B cell (primary cell): ENCODE measurements at regions of chr14 and their contacts with region 1.

Region 1: GRCh38 chr14:75654127-75654732 is 6.4 kb downstream of the ERG28 start:
- DNase-seq: peak; percentile 82
- ATAC-seq: peak; percentile 96
- H3K4me3 ChIP-seq: no peak overlapping the region
- H3K4me3 Mint-ChIP-seq: no peak overlapping the region
- H3K27ac ChIP-seq: no peak overlapping the region
- H3K27ac Mint-ChIP-seq: no peak overlapping the region
- H3K4me1 ChIP-seq: no peaks in the 10 kb centered on the region
- H3K4me1 Mint-ChIP-seq: peaks cover 4% of the 10 kb centered on the region
- H3K27me3 ChIP-seq: no peaks in the 10 kb centered on the region
- H3K27me3 Mint-ChIP-seq: no peaks in the 10 kb centered on the region
- CTCF ChIP-seq: peak; percentile 94

Region 2: DNA sequence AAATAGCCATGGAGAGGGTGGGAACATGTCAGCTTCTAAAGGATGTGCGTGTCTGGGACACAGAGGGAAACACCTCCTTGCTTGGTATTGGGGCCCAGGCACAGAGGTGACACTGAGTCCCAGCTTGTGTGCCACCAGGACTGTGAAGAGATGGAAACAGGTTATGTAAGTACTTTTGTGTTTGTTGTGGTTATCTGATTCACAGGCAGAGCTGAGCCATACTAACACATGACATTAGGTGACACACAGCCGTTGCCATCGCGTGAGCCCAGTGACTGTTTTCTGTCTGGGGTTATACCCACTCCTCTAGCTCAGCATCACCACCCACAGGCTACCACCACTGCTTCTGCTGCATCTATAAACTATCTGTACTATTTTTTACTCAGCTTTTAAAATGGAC is 87.9 kb before region 1 on chr14:
- CTCF ChIA-PET with region 1: interaction called, 447 read pairs
- POLR2A ChIA-PET with region 1: no interaction called
- intact Hi-C with region 1: no loop called
- DNase-seq: no peak
- ATAC-seq: no peak
- H3K4me3 ChIP-seq: no peak overlapping the region
- H3K4me3 Mint-ChIP-seq: no peak overlapping the region
- H3K27ac ChIP-seq: no peak overlapping the region
- H3K27ac Mint-ChIP-seq: no peak overlapping the region
- H3K4me1 ChIP-seq: peaks cover 0 to under 1% of the 10 kb centered on the region in 2 donors
- H3K4me1 Mint-ChIP-seq: peaks cover 4% of the 10 kb centered on the region
- H3K27me3 ChIP-seq: no peaks in the 10 kb centered on the region
- H3K27me3 Mint-ChIP-seq: no peaks in the 10 kb centered on the region
- CTCF ChIP-seq: no peak

Region 3: DNA sequence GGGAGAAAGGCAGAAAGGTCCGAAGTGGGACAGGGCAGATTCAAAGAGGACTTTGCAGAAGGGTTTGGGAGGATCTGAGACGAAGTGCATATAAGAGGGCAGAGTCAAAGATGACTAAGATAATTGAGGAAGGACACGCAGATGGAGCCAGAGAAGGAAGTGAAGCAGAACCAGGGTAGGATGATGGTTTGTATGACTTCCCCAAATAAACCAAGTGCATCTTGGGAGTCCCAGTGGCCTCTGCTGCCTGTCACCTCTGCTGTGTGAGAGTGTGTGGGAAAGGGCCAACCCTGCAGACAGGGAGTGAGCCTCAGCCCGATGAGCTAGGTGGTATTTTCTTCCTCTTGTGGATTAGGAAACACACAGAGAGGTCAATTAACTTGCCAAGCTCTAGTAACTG is 39.0 kb before region 1 on chr14:
- CTCF ChIA-PET with region 1: interaction called, 15 read pairs
- POLR2A ChIA-PET with region 1: no interaction called
- intact Hi-C with region 1: no loop called
- DNase-seq: peak; percentile 60
- ATAC-seq: peak; percentile 85
- H3K4me3 ChIP-seq: no peak overlapping the region
- H3K4me3 Mint-ChIP-seq: no peak overlapping the region
- H3K27ac ChIP-seq: no peak overlapping the region
- H3K27ac Mint-ChIP-seq: no peak overlapping the region
- H3K4me1 ChIP-seq: peaks cover 8 to 9% of the 10 kb centered on the region in 2 donors
- H3K4me1 Mint-ChIP-seq: peaks cover 14% of the 10 kb centered on the region
- H3K27me3 ChIP-seq: peaks cover 0 to 3% (median 1%) of the 10 kb centered on the region in 4 experiments
- H3K27me3 Mint-ChIP-seq: no peaks in the 10 kb centered on the region
- CTCF ChIP-seq: no peak

Region 4: DNA sequence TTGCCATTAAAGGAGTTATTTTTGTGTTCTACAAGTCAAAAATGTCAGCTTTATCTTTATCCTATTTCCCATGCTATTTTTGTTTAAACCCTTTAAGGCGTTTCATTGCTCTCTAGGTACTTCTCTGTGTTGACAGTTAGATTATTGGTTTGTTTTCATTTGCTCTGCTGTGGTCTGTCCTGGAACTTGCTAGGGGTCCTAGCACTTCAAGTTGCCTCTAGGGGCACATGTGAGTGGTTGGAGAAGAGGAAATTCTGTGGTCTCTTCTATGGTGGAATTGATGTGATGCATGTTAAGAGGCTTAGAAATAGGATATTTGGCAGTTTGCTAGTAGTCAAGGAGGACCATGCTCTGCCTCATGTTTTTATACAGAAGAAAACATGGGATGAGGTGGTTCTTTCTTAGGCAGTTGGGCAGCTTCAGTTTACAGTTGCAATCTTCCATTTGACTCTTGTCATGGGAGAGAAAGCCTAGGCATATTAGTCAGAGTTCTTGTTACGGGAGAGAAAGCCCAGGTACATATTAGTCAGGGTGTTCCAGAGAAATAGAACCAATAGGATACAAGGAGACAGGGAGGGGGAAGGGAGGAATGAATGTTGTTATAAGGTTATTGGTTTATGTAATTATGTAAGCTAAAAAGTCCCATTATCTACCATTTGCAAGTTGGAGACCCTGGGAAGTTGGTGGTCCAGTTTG is 21.2 kb after region 1 on chr14:
- CTCF ChIA-PET with region 1: interaction called, 10 read pairs
- POLR2A ChIA-PET with region 1: no interaction called
- intact Hi-C with region 1: no loop called
- DNase-seq: no peak
- ATAC-seq: no peak
- H3K4me3 ChIP-seq: no peak overlapping the region
- H3K4me3 Mint-ChIP-seq: no peak overlapping the region
- H3K27ac ChIP-seq: no peak overlapping the region
- H3K27ac Mint-ChIP-seq: no peak overlapping the region
- H3K4me1 ChIP-seq: no peaks in the 10 kb centered on the region
- H3K4me1 Mint-ChIP-seq: no peaks in the 10 kb centered on the region
- H3K27me3 ChIP-seq: no peaks in the 10 kb centered on the region
- H3K27me3 Mint-ChIP-seq: no peaks in the 10 kb centered on the region
- CTCF ChIP-seq: no peak